ENCODE measurements at regions of chr11 and their contacts with region 1.

Region 1: GRCh38 chr11:75562048-75562835 is at the start of gene SERPINH1:
- DNase-seq: peak; percentile 58
- ATAC-seq: peak; percentile 76
- H3K4me3 ChIP-seq: peak within 1 kb of the TSS; percentile 54 to 93 (median 84)
- H3K4me3 Mint-ChIP-seq: peak within 1 kb of the TSS; percentile 99
- H3K27ac ChIP-seq: peak within 1 kb of the TSS; percentile 33 to 75
- H3K27ac Mint-ChIP-seq: peak within 1 kb of the TSS; percentile 89
- H3K4me1 ChIP-seq: peaks cover 18 to 21% of the 10 kb centered on the region in 2 donors
- H3K4me1 Mint-ChIP-seq: peaks cover 24% of the 10 kb centered on the region
- H3K27me3 ChIP-seq: peaks cover 0 to 16% (median 6%) of the 10 kb centered on the region in 4 experiments
- H3K27me3 Mint-ChIP-seq: peaks cover 12% of the 10 kb centered on the region
- CTCF ChIP-seq: no peak
- total RNA-seq, gene SERPINH1: 5.7 and 7.5 TPM in 2 replicates

Region 2: DNA sequence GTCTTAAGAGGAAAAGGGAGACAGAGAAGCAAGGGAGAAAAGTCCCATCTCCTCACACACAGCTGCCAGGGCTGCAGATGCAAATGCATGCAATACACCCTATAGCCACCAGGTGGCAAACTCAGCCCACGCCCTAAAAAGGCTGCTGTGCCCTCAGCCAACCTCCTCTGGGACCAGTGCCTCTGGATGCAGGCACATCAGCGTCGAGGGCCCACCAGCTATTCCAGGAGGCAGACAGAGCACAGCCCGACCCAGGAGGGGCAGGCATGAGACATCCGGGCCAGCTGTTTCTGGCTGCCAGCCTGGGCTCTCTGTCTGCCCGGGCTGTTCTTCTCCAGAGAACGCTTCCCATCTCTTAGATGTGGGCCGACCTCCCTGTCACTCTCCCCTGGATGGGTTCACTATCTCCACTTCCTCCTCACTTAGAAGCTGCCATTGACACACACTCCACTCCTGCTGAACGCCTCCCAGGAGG is 282.0 kb before region 1 on chr11:
- CTCF ChIA-PET with region 1: no interaction called
- POLR2A ChIA-PET with region 1: no interaction called
- intact Hi-C with region 1: no loop called
- DNase-seq: peak; percentile 81
- ATAC-seq: peak; percentile 68
- H3K4me3 ChIP-seq: no peak overlapping the region
- H3K4me3 Mint-ChIP-seq: no peak overlapping the region
- H3K27ac ChIP-seq: no peak overlapping the region
- H3K27ac Mint-ChIP-seq: no peak overlapping the region
- H3K4me1 ChIP-seq: peaks cover 14 to 16% of the 10 kb centered on the region in 2 donors
- H3K4me1 Mint-ChIP-seq: peaks cover 16% of the 10 kb centered on the region
- H3K27me3 ChIP-seq: no peaks in the 10 kb centered on the region
- H3K27me3 Mint-ChIP-seq: peaks cover 6% of the 10 kb centered on the region
- CTCF ChIP-seq: peak; percentile 100

Region 3: DNA sequence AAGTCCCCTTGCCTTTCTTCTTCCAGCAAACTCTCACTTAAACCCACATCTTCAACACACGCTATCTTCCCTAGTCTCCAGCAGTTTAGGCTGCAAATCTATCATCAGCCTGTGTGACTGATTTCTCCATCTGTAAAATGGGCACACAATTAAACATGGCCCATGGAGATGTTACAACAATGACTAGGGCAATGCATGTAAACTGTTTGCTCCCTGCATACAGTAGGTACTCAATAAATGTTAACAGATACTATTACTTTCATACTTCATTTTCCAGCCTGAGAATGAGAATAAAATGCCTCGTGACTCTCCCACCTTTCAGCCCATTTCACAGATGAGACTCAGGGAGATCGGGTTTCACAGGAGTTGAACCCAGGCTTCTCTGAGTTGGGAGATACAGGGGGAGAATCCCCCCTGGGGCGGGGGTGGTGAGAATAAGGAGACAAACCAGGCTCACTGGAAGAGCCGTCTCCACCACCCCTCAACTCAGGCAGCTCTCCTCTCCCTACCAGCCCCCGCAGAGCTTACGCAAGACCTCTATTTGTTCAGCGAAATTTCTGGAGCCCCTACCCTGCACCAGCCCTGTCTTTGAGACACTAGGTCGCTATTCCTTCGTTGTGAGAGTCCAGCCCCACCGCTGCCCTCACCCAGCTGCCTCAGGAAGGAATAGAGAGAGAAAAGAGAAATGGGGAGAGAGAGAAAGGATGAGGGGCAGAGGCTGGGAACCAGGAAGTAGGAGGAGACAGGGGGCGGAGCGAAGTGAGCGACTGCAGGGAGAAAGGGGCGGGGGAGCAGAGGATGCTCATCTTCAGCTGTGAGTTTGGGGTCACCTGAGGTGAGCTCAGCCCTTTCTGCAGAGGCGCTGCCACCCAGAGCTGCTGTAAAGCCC is 87.1 kb before region 1 on chr11:
- CTCF ChIA-PET with region 1: no interaction called
- POLR2A ChIA-PET with region 1: no interaction called
- intact Hi-C with region 1: no loop called
- DNase-seq: no peak
- ATAC-seq: no peak
- H3K4me3 ChIP-seq: no peak overlapping the region
- H3K4me3 Mint-ChIP-seq: no peak overlapping the region
- H3K27ac ChIP-seq: no peak overlapping the region
- H3K27ac Mint-ChIP-seq: peak overlapping the region; percentile 29
- H3K4me1 ChIP-seq: peaks cover 0 to 10% of the 10 kb centered on the region in 2 donors
- H3K4me1 Mint-ChIP-seq: peaks cover 16% of the 10 kb centered on the region
- H3K27me3 ChIP-seq: no peaks in the 10 kb centered on the region
- H3K27me3 Mint-ChIP-seq: no peaks in the 10 kb centered on the region
- CTCF ChIP-seq: no peak

Region 4: GRCh38 chr11:75577207-75577606 is 15.0 kb after region 1 on chr11:
- CTCF ChIA-PET with region 1: interaction called, 3 read pairs
- POLR2A ChIA-PET with region 1: interaction called, 5 read pairs
- intact Hi-C with region 1: loop called (anchors 2 kb)
- DNase-seq: no peak
- ATAC-seq: no peak
- H3K4me3 ChIP-seq: no peak overlapping the region
- H3K4me3 Mint-ChIP-seq: no peak overlapping the region
- H3K27ac ChIP-seq: no peak overlapping the region
- H3K27ac Mint-ChIP-seq: no peak overlapping the region
- H3K4me1 ChIP-seq: peaks cover 22 to 31% of the 10 kb centered on the region in 2 donors
- H3K4me1 Mint-ChIP-seq: peaks cover 30% of the 10 kb centered on the region
- H3K27me3 ChIP-seq: no peaks in the 10 kb centered on the region
- H3K27me3 Mint-ChIP-seq: peaks cover 7% of the 10 kb centered on the region
- CTCF ChIP-seq: no peak

Region 5: GRCh38 chr11:75582895-75583717 is 20.9 kb after region 1 on chr11:
- CTCF ChIA-PET with region 1: interaction called, 3 read pairs
- POLR2A ChIA-PET with region 1: interaction called, 7 read pairs
- intact Hi-C with region 1: loop called (anchors 1 kb)
- DNase-seq: peak; percentile 72
- ATAC-seq: peak; percentile 80
- H3K4me3 ChIP-seq: peak overlapping the region; percentile 27 to 69 (median 60)
- H3K4me3 Mint-ChIP-seq: peak overlapping the region; percentile 91
- H3K27ac ChIP-seq: peak overlapping the region; percentile 42 to 60
- H3K27ac Mint-ChIP-seq: peak overlapping the region; percentile 89
- H3K4me1 ChIP-seq: peaks cover 27 to 29% of the 10 kb centered on the region in 2 donors
- H3K4me1 Mint-ChIP-seq: peaks cover 28% of the 10 kb centered on the region
- H3K27me3 ChIP-seq: no peaks in the 10 kb centered on the region
- H3K27me3 Mint-ChIP-seq: no peaks in the 10 kb centered on the region
- CTCF ChIP-seq: no peak